Gastrocnemius medialis (tissue), 4 donors: ENCODE measurements at regions of chrX and their contacts with region 1.

Region 1: DNA sequence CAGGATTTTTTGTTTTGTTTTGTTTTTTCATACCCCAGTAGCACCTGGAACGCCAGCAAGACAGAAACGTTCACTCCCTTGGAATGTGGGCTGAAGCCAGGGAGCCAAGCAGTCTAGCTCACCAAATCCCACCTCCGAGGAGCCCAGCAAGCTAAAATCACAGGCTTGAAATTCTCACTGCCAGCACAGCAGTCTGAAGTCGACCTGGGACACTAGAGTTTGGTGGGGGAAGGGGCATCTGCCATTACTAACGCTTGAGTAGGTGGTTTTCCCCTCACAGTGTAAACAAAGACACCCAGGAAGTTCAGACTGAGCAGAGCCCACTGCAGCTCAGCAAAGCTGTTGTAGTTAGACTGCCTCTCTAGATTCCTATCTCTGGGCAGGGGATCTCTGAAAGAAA is 99.6 kb upstream of the FGF16 start:
- DNase-seq: no peak
- ATAC-seq: no peak
- H3K4me3 ChIP-seq: no peak overlapping the region
- H3K27ac ChIP-seq: no peak overlapping the region
- H3K4me1 ChIP-seq: no peaks in the 10 kb centered on the region
- H3K27me3 ChIP-seq: no peaks in the 10 kb centered on the region
- CTCF ChIP-seq: no peak
- POLR2A ChIP-seq: no peak

Region 2: GRCh38 chrX:77450996-77451395 is 103.4 kb after region 1 on chrX:
- in situ Hi-C with region 1: loop called in 1 of 4 experiments (anchors 25 kb)
- intact Hi-C with region 1: no loop called
- DNase-seq: no peak
- ATAC-seq: peak in 1 of 2 donors; percentile 50
- H3K4me3 ChIP-seq: no peak overlapping the region
- H3K27ac ChIP-seq: no peak overlapping the region
- H3K4me1 ChIP-seq: no peaks in the 10 kb centered on the region
- H3K27me3 ChIP-seq: peaks cover 0 to 17% (median 0%) of the 10 kb centered on the region in 3 donors
- CTCF ChIP-seq: no peak
- POLR2A ChIP-seq: no peak

Region 3: GRCh38 chrX:78092296-78092695 is 744.7 kb after region 1 on chrX:
- in situ Hi-C with region 1: no loop called
- intact Hi-C with region 1: no loop called
- DNase-seq: no peak
- ATAC-seq: peak in 1 of 2 donors; percentile 46
- H3K4me3 ChIP-seq: no peak overlapping the region
- H3K27ac ChIP-seq: no peak overlapping the region
- H3K4me1 ChIP-seq: no peaks in the 10 kb centered on the region
- H3K27me3 ChIP-seq: peaks cover 0 to 4% (median 0%) of the 10 kb centered on the region in 3 donors
- CTCF ChIP-seq: peak in 4 of 5 experiments; percentile 16 to 41 (median 18)
- POLR2A ChIP-seq: no peak